ENCODE measurements at regions of chr6 and their contacts with region 1.

Region 1: DNA sequence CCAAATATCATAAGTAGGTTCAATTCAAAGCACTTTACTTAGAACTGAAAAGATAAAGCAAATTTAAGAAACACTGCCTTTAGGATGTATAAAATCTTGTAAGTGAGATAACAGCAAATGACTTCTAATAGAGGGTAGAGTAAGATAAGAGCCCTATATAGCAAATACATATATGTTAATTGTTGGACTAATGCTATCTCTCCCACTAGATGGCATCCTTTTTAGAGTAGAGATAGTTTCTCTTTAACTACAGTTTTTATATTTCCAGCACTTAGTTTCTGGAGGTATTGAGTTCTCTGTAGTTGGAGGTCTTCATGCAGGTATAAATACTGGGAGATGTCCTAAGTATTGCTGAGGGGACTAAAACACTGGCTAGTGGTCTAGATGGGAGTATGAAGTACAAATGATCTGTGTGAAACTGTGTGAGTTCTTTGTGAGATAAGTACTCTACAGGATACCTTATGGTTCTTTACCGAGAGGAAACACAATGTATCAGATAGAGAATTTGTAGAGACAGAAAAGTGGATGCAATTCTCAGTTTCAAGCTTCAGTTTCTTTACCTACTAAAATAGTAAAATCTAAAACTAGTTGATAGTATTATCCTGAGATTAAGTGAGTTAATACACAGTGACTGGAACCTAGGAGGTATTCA is 399.3 kb downstream of the KHDRBS2 start:
- DNase-seq: no peak
- ATAC-seq: peak; percentile 31
- H3K4me3 Mint-ChIP-seq: no peak overlapping the region
- H3K27ac Mint-ChIP-seq: no peak overlapping the region
- H3K4me1 Mint-ChIP-seq: peaks cover 2% of the 10 kb centered on the region
- H3K27me3 Mint-ChIP-seq: no peaks in the 10 kb centered on the region
- CTCF ChIP-seq: no peak

Region 2: GRCh38 chr6:62775427-62776022 is 888.8 kb after region 1 on chr6:
- CTCF ChIA-PET with region 1: no interaction called
- POLR2A ChIA-PET with region 1: no interaction called
- intact Hi-C with region 1: loop called (anchors 5 kb)
- DNase-seq: no peak
- ATAC-seq: no peak
- H3K4me3 Mint-ChIP-seq: no peak overlapping the region
- H3K27ac Mint-ChIP-seq: no peak overlapping the region
- H3K4me1 Mint-ChIP-seq: no peaks in the 10 kb centered on the region
- H3K27me3 Mint-ChIP-seq: no peaks in the 10 kb centered on the region
- CTCF ChIP-seq: no peak

Measured in activated B cell treated with CpG ODN at 0.5 μM for 24 hours (primary cell).